ENCODE measurements at regions of chr9 and their contacts with region 1.

Region 1: GRCh38 chr9:33024966-33025571 is at the start of gene DNAJA1:
- DNase-seq: peak; percentile 92 to 98 (median 97)
- H3K4me3 ChIP-seq: peak within 1 kb of the TSS; percentile 96 to 100
- H3K4me3 Mint-ChIP-seq: peak within 1 kb of the TSS; percentile 92 to 99 (median 96)
- H3K27ac ChIP-seq: peak within 1 kb of the TSS; percentile 100
- H3K27ac Mint-ChIP-seq: peak within 1 kb of the TSS; percentile 94 to 98 (median 97)
- H3K4me1 ChIP-seq: peaks cover 63% of the 10 kb centered on the region
- H3K4me1 Mint-ChIP-seq: peaks cover 41 to 82% (median 66%) of the 10 kb centered on the region in 4 donors
- H3K27me3 ChIP-seq: no peaks in the 10 kb centered on the region
- H3K27me3 Mint-ChIP-seq: no peaks in the 10 kb centered on the region
- total RNA-seq, gene DNAJA1: 79.8 to 84.4 TPM

Region 2: DNA sequence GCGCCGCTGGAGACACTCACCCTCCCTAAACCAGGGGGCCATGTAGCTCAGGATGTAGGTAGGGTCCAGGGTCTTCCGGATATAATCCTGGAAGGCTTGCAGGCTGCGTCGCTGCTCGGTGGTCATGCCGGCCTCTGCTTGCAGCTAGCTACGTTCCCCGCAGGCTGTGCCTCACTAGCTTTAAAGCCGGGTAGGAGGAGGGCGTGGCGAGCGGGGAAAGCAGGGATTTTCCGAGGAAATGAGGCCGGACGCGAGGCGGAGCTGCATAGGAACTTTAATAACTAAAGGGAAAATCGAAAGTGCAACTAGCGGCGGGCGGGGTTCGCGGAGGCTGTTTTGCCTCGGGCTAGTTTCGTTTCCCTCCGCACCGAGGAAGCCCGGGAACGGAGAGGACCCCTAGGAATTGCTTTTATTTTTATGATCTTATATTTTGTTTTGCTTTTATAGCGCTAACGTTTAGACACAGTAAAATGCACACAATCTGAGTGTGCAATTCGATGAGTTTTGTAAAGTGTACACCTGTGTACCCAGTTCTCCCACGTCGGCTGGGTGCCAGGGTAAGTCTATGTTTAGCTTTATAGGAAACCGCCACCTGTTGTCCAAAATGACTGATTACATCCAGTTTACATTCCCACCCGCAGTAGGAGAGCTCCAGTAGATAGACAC is 498.9 kb before region 1 on chr9 and contains the start of gene RIGI:
- CTCF ChIA-PET with region 1: no interaction called
- POLR2A ChIA-PET with region 1: interaction called, 13 read pairs
- intact Hi-C with region 1: no loop called
- DNase-seq: peak; percentile 80 to 92 (median 81)
- H3K4me3 ChIP-seq: peak within 1 kb of the TSS; percentile 78 to 93
- H3K4me3 Mint-ChIP-seq: peak within 1 kb of the TSS; percentile 91 to 99 (median 97)
- H3K27ac ChIP-seq: peak within 1 kb of the TSS; percentile 94
- H3K27ac Mint-ChIP-seq: peak within 1 kb of the TSS; percentile 93 to 98 (median 97)
- H3K4me1 ChIP-seq: peaks cover 46% of the 10 kb centered on the region
- H3K4me1 Mint-ChIP-seq: peaks cover 40 to 70% (median 54%) of the 10 kb centered on the region in 4 donors
- H3K27me3 ChIP-seq: no peaks in the 10 kb centered on the region
- H3K27me3 Mint-ChIP-seq: no peaks in the 10 kb centered on the region
- total RNA-seq, gene RIGI: 29.0 to 32.0 TPM

Region 3: DNA sequence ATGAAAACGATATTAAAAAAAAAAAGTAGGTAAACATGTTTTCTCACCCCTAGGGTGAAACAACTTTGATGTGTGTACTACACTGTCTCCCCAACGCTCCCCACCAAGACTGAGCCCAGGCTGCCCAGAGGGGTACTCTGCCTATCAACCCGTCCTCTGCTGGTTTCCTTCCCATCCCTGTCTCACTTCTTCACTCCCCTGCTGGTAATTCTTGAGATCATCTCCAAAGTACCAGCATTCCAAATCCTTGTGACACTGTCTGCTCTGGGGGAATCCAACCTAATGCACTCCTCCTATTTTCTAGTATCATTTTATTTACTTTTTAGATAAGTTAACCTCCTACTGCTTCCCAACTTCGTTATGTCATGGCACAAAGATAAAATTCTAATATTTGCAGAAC is 17.3 kb before region 1 on chr9:
- CTCF ChIA-PET with region 1: interaction called, 3 read pairs
- POLR2A ChIA-PET with region 1: interaction called, 50 read pairs
- intact Hi-C with region 1: no loop called
- DNase-seq: no peak
- H3K4me3 ChIP-seq: no peak overlapping the region
- H3K4me3 Mint-ChIP-seq: no peak overlapping the region
- H3K27ac ChIP-seq: no peak overlapping the region
- H3K27ac Mint-ChIP-seq: peak overlapping the region in 1 of 7 donors; percentile 68
- H3K4me1 ChIP-seq: no peaks in the 10 kb centered on the region
- H3K4me1 Mint-ChIP-seq: peaks cover 0 to under 1% (median under 1%) of the 10 kb centered on the region in 4 donors
- H3K27me3 ChIP-seq: no peaks in the 10 kb centered on the region
- H3K27me3 Mint-ChIP-seq: no peaks in the 10 kb centered on the region

Region 4: GRCh38 chr9:33076358-33077004 is 51.4 kb after region 1 on chr9 and contains the start of gene SMU1:
- CTCF ChIA-PET with region 1: interaction called, 3 read pairs
- POLR2A ChIA-PET with region 1: interaction called, 42 read pairs
- intact Hi-C with region 1: loop called (anchors 1 kb)
- DNase-seq: peak; percentile 94 to 98 (median 96)
- H3K4me3 ChIP-seq: peak within 1 kb of the TSS; percentile 79 to 92
- H3K4me3 Mint-ChIP-seq: peak within 1 kb of the TSS; percentile 94 to 100 (median 99)
- H3K27ac ChIP-seq: peak within 1 kb of the TSS; percentile 94
- H3K27ac Mint-ChIP-seq: peak within 1 kb of the TSS; percentile 99 to 100 (median 100)
- H3K4me1 ChIP-seq: peaks cover 47% of the 10 kb centered on the region
- H3K4me1 Mint-ChIP-seq: peaks cover 17 to 51% (median 34%) of the 10 kb centered on the region in 4 donors
- H3K27me3 ChIP-seq: no peaks in the 10 kb centered on the region
- H3K27me3 Mint-ChIP-seq: no peaks in the 10 kb centered on the region
- total RNA-seq, gene SMU1: 30.9 to 31.6 TPM

Region 5: GRCh38 chr9:33264473-33265177 is 239.6 kb after region 1 on chr9 and contains the starts of genes BAG1 and CHMP5:
- CTCF ChIA-PET with region 1: no interaction called
- POLR2A ChIA-PET with region 1: interaction called, 13 read pairs
- intact Hi-C with region 1: loop called (anchors 1 kb)
- DNase-seq: peak; percentile 99 to 100 (median 100)
- H3K4me3 ChIP-seq: peak within 1 kb of the TSS; percentile 71 to 85
- H3K4me3 Mint-ChIP-seq: peak within 1 kb of the TSS; percentile 95 to 100 (median 97)
- H3K27ac ChIP-seq: peak within 1 kb of the TSS; percentile 76
- H3K27ac Mint-ChIP-seq: peak within 1 kb of the TSS; percentile 90 to 99 (median 98)
- H3K4me1 ChIP-seq: peaks cover 38% of the 10 kb centered on the region
- H3K4me1 Mint-ChIP-seq: peaks cover 38 to 53% (median 44%) of the 10 kb centered on the region in 4 donors
- H3K27me3 ChIP-seq: no peaks in the 10 kb centered on the region
- H3K27me3 Mint-ChIP-seq: no peaks in the 10 kb centered on the region
- total RNA-seq, gene BAG1: 53.5 to 56.3 TPM
- total RNA-seq, gene CHMP5: 32.3 to 35.0 TPM